ENCODE measurements at regions of chr2 and their contacts with region 1.

Region 1: DNA sequence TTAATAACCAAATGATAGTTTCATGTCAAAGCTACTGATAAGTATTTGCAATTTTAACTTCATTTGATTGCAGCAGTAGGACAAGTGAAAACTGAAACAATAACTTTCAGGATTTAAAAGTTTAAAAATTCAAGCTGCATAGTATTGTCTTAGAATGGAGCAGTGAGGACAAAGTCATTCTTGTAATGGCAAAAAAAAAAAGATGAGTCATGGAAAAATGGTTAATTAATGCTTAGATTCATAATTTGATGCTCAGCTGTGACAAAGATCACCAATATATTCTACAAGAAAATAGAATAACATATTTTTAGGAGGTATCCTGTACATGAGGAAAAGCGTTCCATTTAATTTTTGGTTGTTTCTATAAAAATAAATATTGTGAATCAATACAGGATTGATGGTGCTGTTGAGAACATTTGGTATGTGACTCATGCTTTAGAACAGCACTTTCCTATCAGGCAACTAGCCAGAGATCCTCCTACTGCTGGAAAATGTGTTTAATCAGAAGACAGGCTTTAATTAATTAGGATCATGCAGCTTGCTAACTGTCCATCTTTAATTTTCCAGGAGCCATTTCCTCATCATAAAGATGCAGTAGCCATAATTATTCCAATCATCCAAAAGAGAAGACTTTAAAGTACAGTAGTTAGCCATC is 239.0 kb upstream of the MMADHC start:
- DNase-seq: peak; percentile 55
- H3K4me3 ChIP-seq: no peak overlapping the region
- H3K27ac ChIP-seq: no peak overlapping the region
- H3K4me1 ChIP-seq: peaks cover 36% of the 10 kb centered on the region
- H3K27me3 ChIP-seq: no peaks in the 10 kb centered on the region
- CTCF ChIP-seq: no peak

Region 2: GRCh38 chr2:149733936-149734685 is 92.5 kb before region 1 on chr2:
- CTCF ChIA-PET with region 1: no interaction called
- POLR2A ChIA-PET with region 1: no interaction called
- intact Hi-C with region 1: loop called (anchors 5 kb)
- DNase-seq: peak; percentile 96
- H3K4me3 ChIP-seq: no peak overlapping the region
- H3K27ac ChIP-seq: peak overlapping the region; percentile 18
- H3K4me1 ChIP-seq: peaks cover 37% of the 10 kb centered on the region
- H3K27me3 ChIP-seq: no peaks in the 10 kb centered on the region
- CTCF ChIP-seq: no peak

Region 3: GRCh38 chr2:149902081-149902480 is 75.5 kb after region 1 on chr2:
- CTCF ChIA-PET with region 1: no interaction called
- POLR2A ChIA-PET with region 1: no interaction called
- intact Hi-C with region 1: no loop called
- DNase-seq: no peak
- H3K4me3 ChIP-seq: no peak overlapping the region
- H3K27ac ChIP-seq: no peak overlapping the region
- H3K4me1 ChIP-seq: no peaks in the 10 kb centered on the region
- H3K27me3 ChIP-seq: no peaks in the 10 kb centered on the region
- CTCF ChIP-seq: no peak

Region 4: GRCh38 chr2:150601280-150602038 is 774.9 kb after region 1 on chr2:
- CTCF ChIA-PET with region 1: no interaction called
- POLR2A ChIA-PET with region 1: no interaction called
- intact Hi-C with region 1: loop called (anchors 10 kb)
- DNase-seq: no peak
- H3K4me3 ChIP-seq: no peak overlapping the region
- H3K27ac ChIP-seq: no peak overlapping the region
- H3K4me1 ChIP-seq: peaks cover 2% of the 10 kb centered on the region
- H3K27me3 ChIP-seq: no peaks in the 10 kb centered on the region
- CTCF ChIP-seq: no peak